ENCODE measurements at regions of chr7 and their contacts with region 1.

Region 1: GRCh38 chr7:75762314-75762917 is 9.6 kb downstream of the CCL26 start:
- DNase-seq: peak; percentile 80 to 92
- ATAC-seq: peak; percentile 97 to 99
- H3K4me3 ChIP-seq: no peak overlapping the region
- H3K27ac ChIP-seq: 0 out of 6 replicates have a peak overlapping the region, but pooled peaks have one; percentile 4 to 15
- H3K4me1 ChIP-seq: 0 out of 3 replicates have a peak, but pooled peaks cover 4% of the 10 kb centered on the region
- CTCF ChIP-seq: peak; percentile 84
- EP300 ChIP-seq: no peak
- POLR2A ChIP-seq: no peak
- RAD21 ChIP-seq: peak; percentile 94

Region 2: DNA sequence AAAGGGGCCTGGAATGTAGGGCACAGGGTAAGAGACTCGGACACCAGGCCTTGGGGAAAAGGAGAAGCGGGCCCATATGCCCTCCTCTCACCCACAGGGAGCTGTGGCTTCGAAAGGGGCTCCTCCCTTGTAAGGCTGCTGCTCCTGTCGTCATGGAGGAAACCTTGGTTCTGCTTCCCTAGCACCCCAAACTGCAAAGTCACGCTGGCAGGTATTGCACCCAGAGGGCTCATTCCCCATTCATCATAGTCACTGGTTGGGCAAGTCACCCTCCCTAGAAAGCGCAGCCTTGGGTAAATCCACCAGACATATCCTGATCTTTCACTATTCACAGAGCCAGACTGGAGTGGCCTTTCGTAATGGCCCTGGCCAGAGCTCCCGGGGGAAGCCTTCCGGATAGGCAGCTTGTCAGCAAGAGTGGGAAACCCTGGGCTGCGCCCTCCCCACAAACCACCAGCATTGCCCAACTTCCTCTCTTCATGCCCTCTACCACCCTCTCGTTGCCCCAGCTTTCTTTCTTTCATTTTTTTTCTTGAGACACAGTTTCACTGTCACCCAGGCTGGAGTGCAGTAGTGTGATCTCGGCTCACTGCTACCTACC is 144.7 kb before region 1 on chr7:
- CTCF ChIA-PET with region 1: interaction called, 20 read pairs
- POLR2A ChIA-PET with region 1: no interaction called
- DNase-seq: peak in 1 of 2 experiments; percentile 38
- ATAC-seq: peak; percentile 54 to 57; a peak in 4 of 6 replicates
- H3K4me3 ChIP-seq: no peak overlapping the region
- H3K27ac ChIP-seq: peak overlapping the region in 1 of 2 experiments; percentile 57; a peak in 3 of 6 replicates
- H3K4me1 ChIP-seq: no peaks in the 10 kb centered on the region
- CTCF ChIP-seq: no peak
- EP300 ChIP-seq: no peak
- POLR2A ChIP-seq: no peak
- RAD21 ChIP-seq: no peak

Region 3: DNA sequence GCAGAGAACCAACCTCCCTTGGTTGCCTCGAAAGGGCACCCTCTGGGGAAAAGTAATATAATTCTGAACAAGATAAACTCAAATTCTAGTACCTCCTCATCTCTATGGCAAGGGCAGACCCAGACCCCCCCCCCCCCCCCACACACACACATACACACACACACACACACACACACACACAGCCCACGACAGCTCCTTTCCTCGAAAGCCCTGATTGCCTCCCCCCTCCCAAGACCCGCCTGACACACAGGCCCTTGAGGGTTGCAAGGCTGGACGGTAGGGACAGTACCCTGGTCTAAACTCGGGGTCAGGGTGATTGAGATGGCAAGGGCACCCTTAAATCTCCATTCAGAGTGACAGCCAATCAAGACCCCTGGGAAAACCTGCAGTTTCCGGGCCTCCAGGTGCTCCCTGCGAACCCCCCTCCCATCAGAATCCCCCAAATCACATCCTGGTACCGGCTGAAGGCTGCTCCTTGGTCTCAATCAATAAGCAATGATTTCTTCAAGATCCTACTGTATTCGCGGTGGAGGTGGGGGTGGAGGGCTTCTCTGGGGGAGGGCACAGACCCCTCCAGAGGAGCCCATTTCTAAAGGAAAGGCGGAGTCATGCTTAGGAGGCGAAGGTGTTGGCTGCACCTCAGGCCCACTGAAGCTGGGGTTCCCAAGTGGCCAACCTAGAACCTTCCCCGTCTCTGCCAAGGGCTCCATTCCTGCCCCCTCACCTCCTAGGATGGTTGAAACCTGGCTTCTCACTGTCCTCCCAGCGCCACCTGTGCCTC is 124.4 kb before region 1 on chr7:
- CTCF ChIA-PET with region 1: interaction called, 11 read pairs
- POLR2A ChIA-PET with region 1: no interaction called
- DNase-seq: no peak
- ATAC-seq: peak in 1 of 2 experiments; percentile 7; a peak in 3 of 6 replicates
- H3K4me3 ChIP-seq: peak overlapping the region; percentile 86
- H3K27ac ChIP-seq: peak overlapping the region; percentile 94 to 98
- H3K4me1 ChIP-seq: peaks cover 17% of the 10 kb centered on the region
- CTCF ChIP-seq: no peak
- EP300 ChIP-seq: no peak
- POLR2A ChIP-seq: no peak
- RAD21 ChIP-seq: no peak

Region 4: DNA sequence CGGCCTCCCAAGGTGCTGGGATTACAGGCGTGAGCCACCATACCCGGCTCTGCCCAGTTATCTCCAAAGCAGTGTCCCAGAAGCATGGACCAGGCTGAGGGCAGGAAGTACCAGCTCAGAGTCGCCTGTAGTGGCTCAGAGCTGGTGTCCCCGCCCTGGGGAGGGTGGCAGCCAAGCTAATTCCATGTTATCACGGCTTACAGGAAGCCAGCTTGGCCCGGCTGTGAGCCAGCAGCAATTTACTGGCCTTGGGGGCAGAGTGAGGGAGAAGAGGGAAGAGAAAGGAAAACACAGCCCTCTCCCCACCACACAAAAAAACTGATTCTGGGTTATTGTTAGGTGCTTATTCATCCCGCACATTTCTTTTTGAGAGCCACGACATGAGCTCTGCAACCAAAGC is 111.7 kb before region 1 on chr7:
- CTCF ChIA-PET with region 1: interaction called, 24 read pairs
- POLR2A ChIA-PET with region 1: no interaction called
- DNase-seq: no peak
- ATAC-seq: no peak
- H3K4me3 ChIP-seq: no peak overlapping the region
- H3K27ac ChIP-seq: peak overlapping the region; percentile 31 to 80
- H3K4me1 ChIP-seq: peaks cover 32% of the 10 kb centered on the region
- CTCF ChIP-seq: no peak
- EP300 ChIP-seq: no peak
- POLR2A ChIP-seq: no peak
- RAD21 ChIP-seq: no peak

Region 5: DNA sequence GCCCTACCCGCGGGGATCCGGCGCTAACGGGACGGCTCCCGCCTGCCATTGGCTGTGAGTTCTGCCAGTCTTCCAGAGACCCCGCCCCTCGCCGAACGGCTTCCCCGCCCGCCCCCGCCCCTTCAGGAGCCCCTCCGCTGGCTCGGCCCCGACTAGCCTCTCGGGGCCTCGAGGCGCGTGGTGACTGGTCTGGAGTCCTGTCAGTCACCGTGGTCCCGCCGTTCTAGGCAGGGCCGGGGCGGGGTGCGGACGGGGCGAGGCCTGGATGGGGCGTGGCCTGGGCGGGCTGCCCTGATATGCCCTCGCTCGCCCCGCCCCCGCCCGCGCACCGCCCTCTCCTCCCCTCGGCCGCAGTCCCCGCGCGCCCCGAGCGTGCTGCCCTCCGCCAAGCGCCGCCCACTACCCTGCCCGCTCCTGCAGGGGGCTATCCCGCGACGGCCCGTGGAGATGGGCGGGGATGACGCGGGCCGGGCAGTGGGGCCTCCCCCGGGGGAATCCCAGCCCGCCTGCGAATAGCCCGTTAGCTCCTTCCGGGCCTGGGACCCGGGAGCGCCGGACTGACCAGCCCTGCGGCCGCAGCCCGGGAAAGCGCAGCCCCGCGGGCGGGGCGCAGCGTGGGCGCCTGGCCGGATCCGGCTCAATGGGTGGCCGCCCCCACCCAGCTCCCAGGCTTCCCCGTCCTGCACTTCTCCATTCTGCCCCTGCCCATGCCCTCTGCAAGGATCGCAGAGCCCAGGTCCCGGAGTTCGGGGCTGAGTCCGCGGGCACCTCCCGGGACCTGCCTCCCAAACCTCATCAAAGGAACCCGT is 23.2 kb before region 1 on chr7:
- CTCF ChIA-PET with region 1: interaction called, 15 read pairs
- POLR2A ChIA-PET with region 1: no interaction called
- DNase-seq: peak; percentile 95 to 99
- ATAC-seq: peak; percentile 93
- H3K4me3 ChIP-seq: peak overlapping the region; percentile 97
- H3K27ac ChIP-seq: peak overlapping the region; percentile 91
- H3K4me1 ChIP-seq: peaks cover 41% of the 10 kb centered on the region
- CTCF ChIP-seq: no peak
- EP300 ChIP-seq: no peak
- POLR2A ChIP-seq: peak; percentile 62
- RAD21 ChIP-seq: no peak

Region 6: GRCh38 chr7:75789361-75789924 is 27.0 kb after region 1 on chr7:
- CTCF ChIA-PET with region 1: interaction called, 11 read pairs
- POLR2A ChIA-PET with region 1: no interaction called
- DNase-seq: no peak
- ATAC-seq: no peak
- H3K4me3 ChIP-seq: no peak overlapping the region
- H3K27ac ChIP-seq: no peak overlapping the region
- H3K4me1 ChIP-seq: peaks cover 11% of the 10 kb centered on the region
- CTCF ChIP-seq: no peak
- EP300 ChIP-seq: no peak
- POLR2A ChIP-seq: no peak
- RAD21 ChIP-seq: no peak